Tibial artery (tissue), 4 donors: ENCODE measurements at regions of chr10 and their contacts with region 1.

Region 1: DNA sequence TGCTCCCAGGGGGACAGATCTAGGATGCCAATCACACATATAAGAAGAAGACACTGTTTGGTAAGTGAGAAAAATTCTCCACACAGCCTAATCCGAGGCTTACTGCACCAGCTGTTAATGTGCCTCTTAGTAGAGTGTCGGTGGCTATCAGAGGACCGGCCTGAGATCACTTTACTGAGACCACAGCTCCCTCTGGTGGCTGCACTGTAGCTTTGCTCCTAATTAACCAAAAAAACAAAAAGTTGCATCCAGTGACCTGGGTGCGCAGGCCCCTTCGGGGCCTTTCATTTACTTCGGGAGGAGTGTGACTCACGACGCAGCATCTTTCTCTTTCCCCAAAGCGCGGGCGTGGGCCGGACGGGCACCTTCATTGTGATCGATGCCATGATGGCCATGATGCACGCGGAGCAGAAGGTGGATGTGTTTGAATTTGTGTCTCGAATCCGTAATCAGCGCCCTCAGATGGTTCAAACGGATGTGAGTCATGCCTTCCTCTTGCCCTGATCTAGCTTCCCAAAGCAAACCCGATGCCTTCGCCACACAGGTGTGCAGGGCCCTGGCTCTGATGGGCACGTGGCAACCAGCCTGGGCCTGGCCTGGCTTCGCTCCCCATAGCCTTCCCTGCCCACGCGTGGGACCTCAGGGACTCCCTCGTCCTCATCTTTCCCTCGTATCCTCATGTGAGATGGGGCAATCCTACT is 56.7 kb downstream of the MKI67 start:
- DNase-seq: peak in 1 of 2 donors; percentile 70
- H3K4me3 ChIP-seq: no peak overlapping the region
- H3K27ac ChIP-seq: no peak overlapping the region
- H3K4me1 ChIP-seq: peaks cover 0 to 9% (median 5%) of the 10 kb centered on the region in 4 donors
- H3K27me3 ChIP-seq: no peaks in the 10 kb centered on the region
- CTCF ChIP-seq: peak; percentile 76 to 90

Region 2: GRCh38 chr10:127913368-127913759 is 156.1 kb before region 1 on chr10:
- intact Hi-C with region 1: loop called (anchors 2 kb)
- DNase-seq: no peak
- H3K4me3 ChIP-seq: no peak overlapping the region
- H3K27ac ChIP-seq: no peak overlapping the region
- H3K4me1 ChIP-seq: peaks cover 0 to 9% (median 3%) of the 10 kb centered on the region in 4 donors
- H3K27me3 ChIP-seq: peaks cover 0 to under 1% of the 10 kb centered on the region in 2 donors
- CTCF ChIP-seq: no peak

Region 3: GRCh38 chr10:128035557-128035973 is 33.9 kb before region 1 on chr10:
- intact Hi-C with region 1: loop called (anchors 5 kb)
- DNase-seq: no peak
- H3K4me3 ChIP-seq: no peak overlapping the region
- H3K27ac ChIP-seq: no peak overlapping the region
- H3K4me1 ChIP-seq: peaks cover 0 to 15% (median 13%) of the 10 kb centered on the region in 4 donors
- H3K27me3 ChIP-seq: no peaks in the 10 kb centered on the region
- CTCF ChIP-seq: peak; percentile 81 to 83

Region 4: DNA sequence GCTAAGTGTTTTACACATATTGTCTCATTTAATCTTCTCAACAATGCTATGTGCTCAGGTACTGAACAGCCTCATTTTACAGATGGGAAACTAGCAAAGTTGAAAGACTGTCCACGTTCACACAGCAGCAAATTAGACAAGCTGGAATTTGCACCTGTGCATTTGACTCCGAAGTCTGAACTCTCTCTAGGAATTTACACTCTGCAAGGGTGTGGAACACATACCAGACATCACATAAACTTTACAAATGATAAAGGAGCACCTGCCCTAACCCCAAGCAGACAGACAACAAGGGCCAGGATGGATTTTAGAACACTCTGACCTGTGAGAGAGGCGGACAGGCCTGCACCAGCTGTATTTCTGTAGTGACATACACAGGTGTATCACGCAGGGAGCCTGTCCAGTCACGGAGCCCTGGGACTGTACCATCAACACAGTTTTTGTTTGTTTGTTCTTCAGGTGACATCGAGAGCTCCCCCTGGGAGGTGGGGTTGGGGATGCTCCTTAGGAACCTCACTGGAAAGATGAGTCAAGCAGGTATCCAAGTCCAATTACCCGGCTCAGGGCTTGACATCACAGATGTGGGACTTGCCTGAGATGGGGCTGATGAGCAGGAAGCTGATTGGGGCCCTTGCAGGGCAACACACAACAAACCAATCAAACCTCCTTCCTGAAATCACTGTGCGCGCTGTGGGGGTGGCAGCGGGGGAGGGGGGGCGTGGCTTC is 25.7 kb after region 1 on chr10:
- intact Hi-C with region 1: no loop called
- DNase-seq: no peak
- H3K4me3 ChIP-seq: no peak overlapping the region
- H3K27ac ChIP-seq: no peak overlapping the region
- H3K4me1 ChIP-seq: no peaks in the 10 kb centered on the region
- H3K27me3 ChIP-seq: no peaks in the 10 kb centered on the region
- CTCF ChIP-seq: no peak